AG04450 (cell line): ENCODE measurements at regions of chr15 and their contacts with region 1.

Region 1: DNA sequence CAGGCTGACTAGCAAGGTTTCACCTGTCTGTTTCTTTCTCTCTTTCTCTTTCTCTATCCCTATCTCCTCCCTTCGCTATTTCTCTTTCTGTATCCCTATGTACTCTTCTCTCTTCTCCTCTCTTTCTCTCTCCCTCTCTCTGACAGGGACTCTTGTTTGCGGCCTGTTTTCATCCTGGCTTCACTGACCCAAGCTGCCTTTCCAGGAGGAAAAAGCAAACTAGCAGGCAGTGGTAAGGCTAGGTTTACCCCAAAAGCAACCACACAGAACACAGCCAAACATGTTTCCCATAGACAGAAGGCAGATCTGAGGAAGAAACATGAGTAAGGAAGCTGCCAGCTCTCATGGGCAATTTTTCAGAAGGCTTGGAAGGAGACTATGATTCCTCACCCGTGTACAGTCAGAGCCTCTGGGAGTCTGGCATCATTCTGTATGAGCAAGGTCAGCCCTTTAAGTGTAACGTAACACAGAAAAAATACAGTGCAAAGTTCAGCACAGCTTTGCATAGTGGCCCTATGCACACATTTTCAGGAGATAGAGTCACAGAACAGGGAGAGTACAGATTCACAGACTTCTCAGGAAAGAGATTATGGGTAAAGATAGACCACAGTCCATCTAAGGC is 61.0 kb downstream of the OCA2 start:
- DNase-seq: no peak
- H3K4me3 ChIP-seq: no peak overlapping the region
- H3K27ac ChIP-seq: no peak overlapping the region
- H3K27me3 ChIP-seq: no peaks in the 10 kb centered on the region
- CTCF ChIP-seq: no peak

Region 2: DNA sequence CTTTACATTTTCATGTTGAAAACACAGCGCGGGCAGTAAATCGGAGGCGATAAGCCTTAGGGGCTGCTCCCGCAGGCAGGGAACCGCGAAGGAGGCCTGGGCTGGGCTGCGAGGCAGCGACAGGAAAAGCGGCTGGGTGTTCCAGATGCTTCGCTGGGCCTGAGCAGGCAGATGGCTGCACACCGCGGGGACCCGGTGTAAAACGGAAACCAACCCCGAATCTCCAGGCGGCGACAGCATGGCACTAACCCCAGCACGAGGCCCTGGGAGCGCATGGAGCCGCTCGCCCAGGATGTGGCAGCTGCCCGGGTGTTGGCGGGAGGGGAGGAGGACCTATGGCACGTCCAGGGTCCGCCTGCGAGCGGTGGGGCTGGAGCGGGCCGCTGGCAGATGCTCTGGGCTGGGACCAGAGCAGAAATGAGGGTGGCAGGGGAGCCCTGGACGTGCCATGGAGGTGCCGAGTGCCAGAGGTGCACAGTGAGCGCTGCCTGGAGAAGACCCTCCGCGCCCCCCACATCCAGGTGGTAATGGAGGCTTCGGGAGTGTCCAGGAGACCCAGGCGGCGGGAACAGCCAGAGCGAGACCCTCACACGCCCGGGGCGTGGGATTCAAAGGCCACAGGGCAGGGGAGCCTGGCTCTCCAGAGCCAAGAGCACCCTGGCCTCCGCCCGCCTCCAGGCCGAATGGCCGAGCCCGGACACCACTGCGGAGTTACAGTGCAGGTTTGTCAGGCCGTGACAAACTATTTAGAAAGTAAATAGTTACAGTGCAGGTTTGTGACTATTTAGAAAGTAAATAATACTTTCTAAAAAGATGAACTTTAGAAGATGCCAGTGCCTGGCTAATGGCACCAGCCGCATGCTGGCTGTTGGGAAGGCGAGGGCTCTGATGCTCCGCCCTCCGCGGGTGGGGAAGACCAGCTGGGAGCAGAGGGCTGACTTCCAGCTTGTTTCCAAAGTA is 232.5 kb before region 1 on chr15:
- CTCF ChIA-PET with region 1: no interaction called
- POLR2A ChIA-PET with region 1: no interaction called
- DNase-seq: no peak
- H3K4me3 ChIP-seq: no peak overlapping the region
- H3K27ac ChIP-seq: no peak overlapping the region
- H3K27me3 ChIP-seq: no peaks in the 10 kb centered on the region
- CTCF ChIP-seq: no peak

Region 3: DNA sequence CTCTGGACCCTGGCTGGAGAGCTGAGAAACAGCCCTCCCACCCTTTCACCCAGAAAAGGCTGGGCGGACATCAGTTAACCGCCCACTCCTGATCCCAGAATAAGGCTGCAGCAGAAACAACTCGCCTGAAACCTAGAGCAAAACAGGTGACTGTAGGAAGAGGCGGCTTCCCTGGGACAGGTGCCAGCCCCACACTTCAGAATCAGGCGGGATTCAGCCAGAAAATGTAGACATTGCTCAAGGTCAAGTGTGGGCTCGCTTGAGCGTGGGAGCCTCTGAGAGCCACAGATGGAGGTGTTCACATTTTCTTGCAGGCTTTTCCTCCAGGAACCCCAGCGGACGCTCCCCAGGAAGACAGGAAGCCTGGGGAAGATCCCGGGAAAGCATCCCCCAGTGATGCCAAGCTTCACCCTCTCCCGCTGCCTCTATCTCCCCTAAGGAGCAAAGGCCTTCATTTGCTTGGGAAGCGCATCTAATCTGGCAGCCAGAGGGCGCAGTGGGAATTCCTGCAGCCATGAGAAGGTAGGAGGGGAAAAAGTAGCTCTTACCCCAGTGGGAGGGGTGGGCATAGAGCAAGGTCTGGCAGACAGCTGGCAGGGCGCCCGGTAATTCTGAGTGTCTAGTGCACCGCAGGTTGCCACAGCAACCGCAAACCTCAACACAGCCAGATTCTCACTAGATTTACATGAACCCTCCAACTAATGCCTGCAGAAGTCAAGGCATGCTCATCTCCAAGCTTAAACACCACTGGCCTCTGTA is 16.6 kb before region 1 on chr15:
- CTCF ChIA-PET with region 1: interaction called, 12 read pairs
- POLR2A ChIA-PET with region 1: no interaction called
- DNase-seq: peak; percentile 42
- H3K4me3 ChIP-seq: no peak overlapping the region
- H3K27ac ChIP-seq: no peak overlapping the region
- H3K27me3 ChIP-seq: peaks cover 2% of the 10 kb centered on the region
- CTCF ChIP-seq: peak; percentile 59